Posterior vena cava (tissue), 2 donors: ENCODE measurements at regions of chr9 and their contacts with region 1.

Region 1: GRCh38 chr9:95887926-95888497 is 12.5 kb downstream of the ERCC6L2 start:
- DNase-seq: no peak

Region 2: GRCh38 chr9:95744321-95744720 is 143.7 kb before region 1 on chr9:
- intact Hi-C with region 1: no loop called
- DNase-seq: no peak

Region 3: DNA sequence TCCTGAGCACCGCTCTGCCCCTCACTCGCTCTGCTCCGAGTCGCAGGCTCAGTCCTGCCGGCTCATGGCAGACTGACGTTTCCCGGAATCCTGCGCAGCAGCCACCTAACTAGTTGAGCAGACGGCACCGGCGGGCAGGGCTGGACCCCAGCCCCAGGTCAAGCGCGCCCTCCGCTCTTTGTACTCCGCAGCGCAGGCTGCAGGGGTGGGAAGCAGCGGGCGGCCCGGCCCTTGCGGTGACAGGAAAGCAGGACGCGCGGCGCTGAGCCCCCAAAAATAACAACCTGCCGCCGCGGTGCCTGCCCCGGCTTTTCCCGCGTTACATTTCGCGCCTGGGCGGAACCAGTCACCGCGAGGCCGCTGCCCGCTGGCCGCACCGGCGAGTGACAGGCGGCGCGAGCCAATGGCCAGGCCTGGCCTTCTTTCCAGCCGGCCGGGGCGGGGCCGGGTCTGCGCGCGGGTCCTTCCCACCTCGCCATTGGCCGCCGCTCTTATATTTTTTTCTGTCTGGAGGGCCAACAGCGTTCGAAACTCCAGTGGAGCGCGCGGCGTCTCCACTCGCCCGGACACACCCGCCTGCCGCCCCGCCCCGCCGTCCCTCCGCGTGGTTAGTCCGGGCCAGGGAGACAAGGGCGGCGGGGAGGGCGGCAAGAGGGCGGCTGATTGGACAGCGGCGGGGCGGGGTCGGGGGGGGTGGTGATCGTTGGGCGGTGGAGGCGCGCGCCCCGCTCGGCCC is 530.2 kb after region 1 on chr9 and contains the start of gene ZNF367:
- intact Hi-C with region 1: loop called in 1 of 2 experiments (anchors 5 kb)
- DNase-seq: peak; percentile 99
- total RNA-seq, gene ZNF367: 1.1 to 2.3 TPM